Sigmoid colon (tissue), 7 donors: ENCODE measurements at regions of chr17 and their contacts with region 1.

Region 1: GRCh38 chr17:4891411-4892342 is 7.7 kb upstream of the C17orf107 start:
- DNase-seq: no peak
- H3K4me3 ChIP-seq: no peak overlapping the region
- H3K27ac ChIP-seq: no peak overlapping the region
- H3K4me1 ChIP-seq: no peaks in the 10 kb centered on the region
- H3K27me3 ChIP-seq: no peaks in the 10 kb centered on the region
- CTCF ChIP-seq: no peak
- EP300 ChIP-seq: no peak
- POLR2A ChIP-seq: no peak

Region 2: GRCh38 chr17:4709794-4710692 is 181.6 kb before region 1 on chr17 and contains the start of gene ARRB2:
- intact Hi-C with region 1: loop called (anchors 5 kb)
- DNase-seq: peak; percentile 99
- H3K4me3 ChIP-seq: peak within 1 kb of the TSS; percentile 73 to 84 (median 78)
- H3K27ac ChIP-seq: peak within 1 kb of the TSS; percentile 82 to 90 (median 88)
- H3K4me1 ChIP-seq: peaks cover 0 to 20% (median 14%) of the 10 kb centered on the region in 4 donors
- H3K27me3 ChIP-seq: no peaks in the 10 kb centered on the region
- CTCF ChIP-seq: peak; percentile 62 to 88 (median 70)
- EP300 ChIP-seq: no peak
- POLR2A ChIP-seq: no peak
- total RNA-seq, gene ARRB2: 22.1 to 35.7 (median 28.2) TPM

Region 3: DNA sequence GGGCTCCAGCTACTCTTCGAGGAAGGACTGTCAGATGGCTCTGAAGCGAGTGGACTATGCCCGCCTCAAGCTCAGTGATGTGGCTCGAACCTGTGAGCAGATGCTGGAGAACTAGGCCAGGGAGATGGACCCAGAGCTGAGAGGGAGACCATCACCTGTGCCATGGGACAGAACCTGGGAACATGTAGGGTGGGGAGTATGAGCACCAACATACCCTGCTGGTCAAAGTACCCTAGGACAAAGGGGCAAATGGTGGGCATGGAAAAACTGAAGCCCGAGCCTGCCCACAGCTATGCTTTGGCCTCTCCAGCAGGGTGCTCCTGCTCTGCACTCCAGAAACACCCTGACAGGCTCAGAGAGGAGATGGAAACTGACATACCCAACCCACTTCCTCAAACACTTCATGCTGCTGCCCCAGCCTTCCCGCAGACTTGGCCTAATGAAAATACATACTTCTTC is 158.6 kb before region 1 on chr17:
- intact Hi-C with region 1: loop called (anchors 2 kb)
- DNase-seq: no peak
- H3K4me3 ChIP-seq: no peak overlapping the region
- H3K27ac ChIP-seq: peak overlapping the region in 1 of 4 donors; percentile 9
- H3K4me1 ChIP-seq: peaks cover 0 to 19% (median 14%) of the 10 kb centered on the region in 4 donors
- H3K27me3 ChIP-seq: no peaks in the 10 kb centered on the region
- CTCF ChIP-seq: no peak
- EP300 ChIP-seq: no peak
- POLR2A ChIP-seq: no peak

Region 4: GRCh38 chr17:4739122-4740024 is 152.3 kb before region 1 on chr17 and contains the starts of genes CXCL16 and ZMYND15:
- intact Hi-C with region 1: loop called (anchors 2 kb)
- DNase-seq: peak; percentile 77
- H3K4me3 ChIP-seq: peak within 1 kb of the TSS; percentile 63 to 70 (median 67)
- H3K27ac ChIP-seq: peak within 1 kb of the TSS; percentile 60 to 71 (median 64)
- H3K4me1 ChIP-seq: peaks cover 0 to 17% (median 11%) of the 10 kb centered on the region in 4 donors
- H3K27me3 ChIP-seq: peaks cover 0 to 12% (median 4%) of the 10 kb centered on the region in 3 donors
- CTCF ChIP-seq: no peak
- EP300 ChIP-seq: no peak
- POLR2A ChIP-seq: peak in 1 of 2 donors; percentile 11
- total RNA-seq, gene CXCL16: 4.6 to 6.8 (median 5.3) TPM
- total RNA-seq, gene ZMYND15: 0.36 to 0.55 (median 0.49) TPM in 3 of 4 donors, not detected in the other

Region 5: GRCh38 chr17:4789901-4790704 is 101.6 kb before region 1 on chr17:
- intact Hi-C with region 1: loop called (anchors 1 kb)
- DNase-seq: peak; percentile 94
- H3K4me3 ChIP-seq: peak overlapping the region; percentile 59 to 77 (median 72)
- H3K27ac ChIP-seq: peak overlapping the region; percentile 95 to 99 (median 96)
- H3K4me1 ChIP-seq: peaks cover 0 to 46% (median 41%) of the 10 kb centered on the region in 4 donors
- H3K27me3 ChIP-seq: peaks cover 0 to 9% (median 0%) of the 10 kb centered on the region in 3 donors
- CTCF ChIP-seq: peak; percentile 31 to 86 (median 74)
- EP300 ChIP-seq: no peak
- POLR2A ChIP-seq: peak; percentile 91

Region 6: DNA sequence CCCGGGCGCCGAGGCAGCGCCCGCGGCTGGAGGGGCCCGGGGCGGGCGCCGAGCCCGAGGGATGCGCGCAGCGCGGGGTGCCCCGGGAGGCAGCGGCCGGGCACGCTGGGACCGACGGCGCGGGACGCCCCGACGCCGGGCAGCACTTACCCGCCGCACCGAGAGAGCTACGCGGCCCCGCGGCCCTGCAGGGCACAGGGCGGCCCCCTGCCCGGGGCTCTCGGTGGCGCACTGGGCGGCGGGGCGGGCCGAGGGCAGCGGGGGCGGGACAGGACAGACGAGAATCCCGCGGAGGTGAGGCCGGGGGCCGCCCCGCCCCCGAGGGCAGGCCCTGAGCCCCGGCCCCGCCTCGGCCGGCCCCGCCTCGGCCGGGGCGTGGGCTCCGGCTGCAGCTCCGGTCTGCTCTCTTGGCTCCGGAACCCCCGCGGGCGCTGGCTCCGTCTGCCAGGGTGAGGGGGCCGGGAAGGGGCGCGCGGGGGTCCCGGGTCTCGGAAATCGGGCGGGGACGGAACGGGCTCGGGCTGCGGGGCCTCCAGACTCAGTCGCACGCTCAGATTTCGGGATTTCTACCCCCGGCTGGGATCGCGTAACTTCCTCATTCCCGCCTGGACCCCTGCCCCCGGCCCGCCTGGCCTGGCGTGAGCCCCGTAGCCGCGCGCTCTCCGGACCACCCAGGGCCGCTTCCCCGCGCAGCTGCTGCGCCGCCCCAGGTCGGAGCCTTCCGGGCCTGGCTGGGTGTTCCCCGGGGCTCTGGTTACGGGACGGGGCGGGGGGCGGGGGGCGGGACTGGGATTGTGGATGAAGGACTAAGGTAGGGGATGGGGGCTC is 84.7 kb before region 1 on chr17 and contains the start of gene PLD2:
- intact Hi-C with region 1: loop called (anchors 5 kb)
- DNase-seq: peak; percentile 91
- H3K4me3 ChIP-seq: peak within 1 kb of the TSS; percentile 77 to 94 (median 82)
- H3K27ac ChIP-seq: peak within 1 kb of the TSS; percentile 78 to 85 (median 82)
- H3K4me1 ChIP-seq: peaks cover 0 to 27% (median 20%) of the 10 kb centered on the region in 4 donors
- H3K27me3 ChIP-seq: no peaks in the 10 kb centered on the region
- CTCF ChIP-seq: no peak
- EP300 ChIP-seq: no peak
- POLR2A ChIP-seq: no peak
- total RNA-seq, gene PLD2: 9.3 to 20.5 (median 12.3) TPM

Region 7: DNA sequence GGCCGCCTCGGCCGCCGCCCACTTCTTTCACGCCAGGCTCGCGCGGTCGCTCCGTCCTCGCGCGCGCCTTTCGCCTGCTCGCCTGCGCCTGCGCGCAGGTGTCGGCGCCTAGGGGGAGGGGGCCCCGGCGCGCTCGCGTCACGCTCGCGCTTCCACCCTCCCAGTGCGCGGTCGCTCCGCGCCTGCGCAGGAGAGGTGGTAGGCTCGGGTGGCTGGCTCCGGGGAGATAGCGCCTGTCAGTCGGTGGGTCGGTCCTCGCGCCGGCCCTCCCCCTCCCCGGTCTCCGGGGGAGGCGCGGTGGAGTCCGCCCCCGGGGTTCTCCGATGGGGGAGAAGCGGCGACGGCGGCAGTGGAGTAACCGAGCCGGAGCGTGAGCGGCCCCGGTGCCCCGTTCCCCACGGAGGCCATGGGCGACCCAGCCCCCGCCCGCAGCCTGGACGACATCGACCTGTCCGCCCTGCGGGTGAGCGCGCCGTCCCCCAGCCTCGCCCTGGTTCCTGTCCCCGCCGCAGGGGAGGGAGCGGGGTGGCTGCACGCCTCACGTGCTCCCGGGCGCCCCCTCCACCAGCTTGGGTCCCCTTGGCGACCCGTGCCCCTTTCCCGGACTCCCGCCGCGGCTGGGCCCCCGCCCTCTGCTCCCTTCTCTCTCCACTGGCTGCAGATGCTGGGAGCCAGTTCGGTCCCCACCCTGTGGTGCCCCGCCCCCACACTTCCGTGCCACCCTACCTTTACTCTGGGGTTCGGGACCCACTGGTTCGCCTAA is 58.3 kb before region 1 on chr17 and contains the start of gene MINK1:
- intact Hi-C with region 1: loop called (anchors 2 kb)
- DNase-seq: peak; percentile 94
- H3K4me3 ChIP-seq: peak within 1 kb of the TSS; percentile 75 to 99 (median 84)
- H3K27ac ChIP-seq: peak within 1 kb of the TSS; percentile 85 to 94 (median 88)
- H3K4me1 ChIP-seq: peaks cover 0 to 34% (median 18%) of the 10 kb centered on the region in 4 donors
- H3K27me3 ChIP-seq: no peaks in the 10 kb centered on the region
- CTCF ChIP-seq: no peak
- EP300 ChIP-seq: no peak
- POLR2A ChIP-seq: peak; percentile 65 to 73
- total RNA-seq, gene MINK1: 17.1 to 43.8 (median 21.0) TPM